ENCODE measurements at regions of chr19 and their contacts with region 1.

Region 1: GRCh38 chr19:10027158-10027693 is 13.9 kb downstream of the RDH8 start:
- DNase-seq: no peak
- ATAC-seq: peak; percentile 55 to 57; a peak in 5 of 6 replicates
- H3K4me3 ChIP-seq: peak overlapping the region; percentile 26; the same call in 1 of the 3 replicates
- H3K27ac ChIP-seq: peak overlapping the region; percentile 60 to 76; a peak in 5 of 6 replicates
- H3K4me1 ChIP-seq: peaks cover 7% of the 10 kb centered on the region
- CTCF ChIP-seq: no peak
- EP300 ChIP-seq: no peak
- POLR2A ChIP-seq: no peak
- RAD21 ChIP-seq: no peak

Region 2: DNA sequence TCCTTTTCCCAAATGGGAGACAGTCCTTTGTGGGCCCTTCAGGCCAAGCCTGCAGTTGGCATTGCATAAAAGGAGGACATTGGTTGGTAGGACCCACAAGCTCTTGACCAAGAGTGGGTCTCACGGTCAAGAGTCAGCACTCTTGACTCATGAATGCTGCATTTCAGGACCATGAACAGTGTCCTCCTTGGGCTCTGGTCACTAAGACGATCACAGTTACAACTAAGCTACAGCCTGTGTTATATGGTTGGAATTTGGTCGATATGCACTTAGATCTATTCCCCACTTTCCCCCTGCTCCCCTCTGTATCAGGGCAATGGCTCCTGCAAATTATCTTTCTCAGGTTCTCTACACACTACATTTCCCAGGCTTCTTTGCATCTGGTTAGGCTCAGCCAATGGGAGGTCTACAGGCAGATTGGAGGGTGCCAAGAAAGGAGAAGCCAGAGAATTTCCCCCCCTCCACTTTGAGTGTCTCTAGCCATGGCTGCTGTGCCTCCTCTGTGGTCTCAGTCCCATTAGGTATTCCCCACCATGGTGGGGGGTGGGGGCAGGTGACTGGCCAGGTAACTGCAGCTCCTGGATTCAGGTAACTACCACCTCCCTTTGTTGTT is 87.8 kb before region 1 on chr19:
- CTCF ChIA-PET with region 1: interaction called, 10 read pairs
- POLR2A ChIA-PET with region 1: no interaction called
- DNase-seq: no peak
- ATAC-seq: peak; percentile 30 to 34; a peak in 2 of 6 replicates
- H3K4me3 ChIP-seq: no peak overlapping the region
- H3K27ac ChIP-seq: no peak overlapping the region
- H3K4me1 ChIP-seq: peaks cover 15% of the 10 kb centered on the region
- CTCF ChIP-seq: no peak
- EP300 ChIP-seq: no peak
- POLR2A ChIP-seq: no peak
- RAD21 ChIP-seq: no peak

Region 3: DNA sequence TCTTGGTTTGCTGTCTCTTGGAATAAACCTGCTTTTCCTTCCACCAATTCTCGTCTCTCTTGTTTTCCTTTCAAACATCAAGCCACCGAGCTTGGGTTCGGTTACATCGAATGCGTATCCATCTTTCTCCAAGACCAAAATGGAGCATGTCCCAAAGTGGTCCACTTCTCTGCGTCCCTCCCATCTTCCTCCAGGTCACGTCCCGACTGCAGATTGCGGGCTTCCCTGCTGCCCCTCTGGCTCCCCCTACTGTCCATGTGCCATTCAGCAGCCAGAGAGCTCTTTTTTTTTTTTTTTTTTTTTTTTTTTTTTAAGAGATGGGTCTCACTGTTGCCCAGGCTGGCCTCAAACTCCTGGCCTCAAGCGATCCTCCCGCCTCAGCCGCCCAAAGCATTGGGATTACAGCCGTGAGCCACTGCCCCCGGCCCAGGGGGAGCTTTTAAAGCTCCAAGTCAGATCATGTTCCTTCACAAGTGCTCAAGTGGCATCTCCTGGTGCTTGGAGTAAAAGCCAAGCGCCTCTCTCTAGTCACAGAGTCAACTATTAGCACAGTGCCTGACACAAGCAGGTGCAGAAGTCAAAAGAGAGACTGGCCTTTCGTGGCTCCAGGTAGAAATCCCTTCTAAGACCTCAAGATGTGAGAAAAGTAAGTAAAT is 26.9 kb before region 1 on chr19:
- CTCF ChIA-PET with region 1: interaction called, 19 read pairs
- POLR2A ChIA-PET with region 1: no interaction called
- DNase-seq: peak; percentile 70 to 74
- ATAC-seq: peak; percentile 79 to 82; a peak in 5 of 6 replicates
- H3K4me3 ChIP-seq: no peak overlapping the region
- H3K27ac ChIP-seq: no peak overlapping the region
- H3K4me1 ChIP-seq: peaks cover 5% of the 10 kb centered on the region; the same call in 1 of the 3 replicates
- CTCF ChIP-seq: peak; percentile 64
- EP300 ChIP-seq: no peak
- POLR2A ChIP-seq: no peak
- RAD21 ChIP-seq: peak; percentile 63 to 71

Region 4: DNA sequence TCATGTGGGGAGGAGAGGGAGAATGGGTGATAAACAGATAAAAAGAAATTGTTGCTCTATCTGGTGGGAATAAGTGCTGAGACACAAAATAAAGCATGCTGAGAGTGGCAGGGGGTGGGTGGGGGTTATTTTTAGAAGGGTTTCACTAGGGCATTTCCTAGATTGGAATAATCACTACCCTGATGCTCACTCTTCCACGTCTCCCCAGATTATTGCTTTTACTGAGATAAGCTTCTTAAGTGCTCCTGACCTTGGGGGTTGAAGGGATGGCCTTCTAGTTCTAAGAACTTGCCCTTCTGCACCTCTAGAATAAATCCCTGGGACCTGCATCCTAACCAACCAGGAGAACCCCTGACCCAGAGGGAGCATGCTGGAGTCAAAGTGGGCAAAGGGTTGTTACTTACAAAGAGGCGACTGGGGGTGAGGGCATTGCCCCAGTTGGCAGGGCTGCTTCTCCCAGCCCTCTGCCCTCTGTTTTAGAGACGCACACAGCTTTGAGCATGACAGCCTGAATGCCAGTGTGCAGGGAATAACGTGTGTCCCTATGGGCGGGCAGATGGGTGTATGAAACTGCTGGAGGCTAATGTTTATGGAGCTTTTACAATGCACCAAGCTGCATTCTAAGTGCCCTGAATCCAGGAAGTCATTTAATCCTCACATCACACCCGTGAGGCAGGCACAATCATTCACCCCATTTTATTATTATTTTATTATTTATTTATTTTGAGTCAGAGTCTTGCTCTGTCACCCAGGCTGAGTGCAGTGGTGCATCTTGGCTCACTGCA is 13.2 kb before region 1 on chr19:
- CTCF ChIA-PET with region 1: interaction called, 30 read pairs
- POLR2A ChIA-PET with region 1: no interaction called
- DNase-seq: no peak
- ATAC-seq: no peak
- H3K4me3 ChIP-seq: no peak overlapping the region
- H3K27ac ChIP-seq: no peak overlapping the region
- H3K4me1 ChIP-seq: peaks cover 15% of the 10 kb centered on the region
- CTCF ChIP-seq: no peak
- EP300 ChIP-seq: no peak
- POLR2A ChIP-seq: no peak
- RAD21 ChIP-seq: no peak

Region 5: DNA sequence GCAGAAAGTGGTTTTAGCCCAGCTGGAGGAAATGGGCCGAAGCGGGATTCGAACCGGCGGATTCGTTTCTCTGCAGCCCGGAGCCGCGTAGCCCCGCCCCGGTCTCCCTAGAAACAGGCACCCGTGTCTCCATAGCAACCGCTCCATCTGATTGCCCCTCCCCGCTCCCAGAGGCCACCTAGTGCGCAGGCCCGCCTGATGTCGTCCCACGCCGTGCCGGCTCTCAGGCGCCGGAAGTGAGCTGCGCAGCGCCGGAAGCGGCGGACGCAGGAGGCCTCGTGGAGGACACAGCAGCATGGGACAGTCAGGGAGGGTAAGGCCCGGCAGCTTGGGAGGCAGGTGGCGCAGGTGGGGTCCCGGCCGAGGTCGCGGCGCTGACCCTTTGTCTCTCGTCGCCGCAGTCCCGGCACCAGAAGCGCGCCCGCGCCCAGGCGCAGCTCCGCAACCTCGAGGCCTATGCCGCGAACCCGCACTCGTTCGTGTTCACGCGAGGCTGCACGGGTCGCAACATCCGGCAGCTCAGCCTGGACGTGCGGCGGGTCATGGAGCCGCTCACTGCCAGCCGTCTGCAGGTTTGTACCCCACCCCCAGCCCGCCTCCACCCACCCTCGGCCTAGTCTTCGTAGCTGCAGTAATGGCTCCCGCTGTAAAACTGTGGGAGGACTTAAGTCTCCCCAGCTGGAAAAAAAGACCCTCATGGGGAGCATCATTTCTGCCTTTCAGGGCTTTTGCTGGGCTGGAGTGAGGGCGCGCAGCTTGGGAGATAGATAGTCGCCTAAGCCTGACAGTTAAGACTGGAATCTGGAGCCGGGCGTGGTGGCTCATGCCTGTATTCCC is 79.1 kb after region 1 on chr19 and contains the start of gene PPAN:
- CTCF ChIA-PET with region 1: interaction called, 10 read pairs
- POLR2A ChIA-PET with region 1: no interaction called
- DNase-seq: peak; percentile 93 to 97
- ATAC-seq: peak; percentile 96 to 97
- H3K4me3 ChIP-seq: peak within 1 kb of the TSS; percentile 97
- H3K27ac ChIP-seq: peak within 1 kb of the TSS; percentile 96 to 99
- H3K4me1 ChIP-seq: peaks cover 17% of the 10 kb centered on the region; the same call in 2 of the 3 replicates
- CTCF ChIP-seq: no peak
- EP300 ChIP-seq: no peak
- POLR2A ChIP-seq: peak; percentile 71
- RAD21 ChIP-seq: no peak
- polyA plus RNA-seq, gene PPAN: 26.6 and 30.8 TPM in 2 replicates

Measured in A549 (cell line).